AG04450 (cell line): ENCODE measurements at regions of chr14 and their contacts with region 1.

Region 1: GRCh38 chr14:53325176-53325806 is 172.2 kb upstream of the DDHD1 start:
- DNase-seq: no peak
- H3K4me3 ChIP-seq: no peak overlapping the region
- H3K27ac ChIP-seq: no peak overlapping the region
- H3K27me3 ChIP-seq: no peaks in the 10 kb centered on the region
- CTCF ChIP-seq: peak; percentile 66

Region 2: DNA sequence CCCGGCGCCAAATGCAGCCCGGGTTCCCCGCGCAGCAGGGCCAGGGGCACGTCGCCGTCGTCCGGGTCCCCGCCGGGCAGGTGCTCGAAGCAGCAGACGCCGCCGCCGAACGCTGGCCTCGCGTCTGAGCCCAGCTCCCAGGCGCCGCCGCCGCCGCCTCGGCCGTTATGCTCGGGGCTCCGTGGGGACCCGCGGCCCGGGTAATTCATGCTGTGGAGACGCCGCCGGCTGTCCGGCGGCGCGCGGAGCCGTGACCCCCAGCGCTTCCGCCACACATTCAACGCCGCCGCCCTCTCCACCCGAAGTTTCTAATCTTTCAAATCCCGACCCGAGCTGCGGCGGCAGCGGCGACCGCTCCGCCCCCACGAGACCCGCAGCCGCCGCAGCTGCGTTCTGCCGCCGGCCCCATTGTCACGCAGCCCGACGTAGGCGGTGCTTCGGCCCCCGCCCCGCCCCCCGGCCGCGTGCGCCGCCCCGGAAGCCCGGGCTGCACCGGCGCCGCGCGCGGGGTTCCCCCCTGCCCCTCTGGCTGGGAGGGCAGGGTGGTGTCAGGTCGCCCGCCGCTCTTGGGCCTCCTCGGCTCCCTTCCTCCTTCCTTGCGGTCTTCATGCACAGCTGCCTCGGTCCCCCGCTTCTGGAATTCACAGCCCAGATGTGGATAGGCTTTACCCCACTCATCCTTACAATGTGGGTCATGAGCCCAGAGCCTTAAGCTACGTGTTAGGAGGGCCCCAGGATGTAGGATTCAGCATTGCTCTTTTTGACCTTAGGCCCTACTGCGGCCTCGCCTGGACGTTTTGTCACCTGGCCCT is 172.2 kb before region 1 on chr14 and contains the start of gene DDHD1:
- CTCF ChIA-PET with region 1: no interaction called
- POLR2A ChIA-PET with region 1: no interaction called
- DNase-seq: no peak
- H3K4me3 ChIP-seq: peak within 1 kb of the TSS; percentile 94
- H3K27ac ChIP-seq: peak within 1 kb of the TSS; percentile 70
- H3K27me3 ChIP-seq: no peaks in the 10 kb centered on the region
- CTCF ChIP-seq: no peak
- polyA plus RNA-seq, gene DDHD1: 11.1 and 16.7 TPM in 2 replicates

Region 3: DNA sequence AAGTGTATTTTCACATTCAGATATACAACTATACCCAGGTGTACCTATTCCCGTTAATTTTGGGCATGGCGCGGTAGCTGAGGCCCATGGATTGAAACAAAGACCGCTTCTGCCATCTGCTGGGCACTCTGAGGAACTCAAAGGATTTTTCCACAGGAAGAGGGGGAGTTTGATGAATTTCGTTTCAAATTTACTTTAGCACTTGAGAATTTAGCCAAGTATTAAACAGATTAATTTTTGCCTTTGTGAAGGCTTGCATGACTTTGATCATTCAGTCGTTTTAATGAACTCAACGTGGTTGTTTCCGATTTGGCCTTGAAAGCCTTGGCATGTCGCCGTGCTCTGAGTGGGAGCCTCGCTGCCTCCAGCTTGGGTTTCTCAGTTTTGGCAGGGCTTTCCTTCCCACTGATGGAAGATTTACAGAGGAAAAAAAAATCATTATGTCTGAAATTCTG is 19.0 kb before region 1 on chr14:
- CTCF ChIA-PET with region 1: interaction called, 20 read pairs
- POLR2A ChIA-PET with region 1: no interaction called
- DNase-seq: peak; percentile 42
- H3K4me3 ChIP-seq: peak overlapping the region; percentile 55
- H3K27ac ChIP-seq: no peak overlapping the region
- H3K27me3 ChIP-seq: peaks cover 2% of the 10 kb centered on the region
- CTCF ChIP-seq: peak; percentile 79

Region 4: DNA sequence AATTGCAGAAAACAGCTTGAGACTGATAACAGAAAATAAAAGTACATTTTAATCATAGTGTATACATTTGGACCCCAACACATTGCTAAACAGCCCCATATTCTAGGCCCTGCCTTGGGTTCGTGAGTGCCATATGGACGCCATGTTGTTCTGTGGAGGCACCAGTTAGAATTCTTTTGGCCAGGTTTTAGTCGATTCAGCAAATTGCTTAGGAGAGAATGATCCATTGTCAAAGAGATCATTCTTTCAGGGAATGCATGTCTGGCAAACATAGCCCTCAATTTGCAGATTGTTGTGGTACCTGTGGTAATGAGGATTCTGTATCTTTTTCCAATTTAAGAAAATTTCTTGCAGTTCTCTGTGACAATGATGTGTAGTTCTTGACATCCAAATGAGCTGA is 11.4 kb after region 1 on chr14:
- CTCF ChIA-PET with region 1: interaction called, 10 read pairs
- POLR2A ChIA-PET with region 1: no interaction called
- DNase-seq: no peak
- H3K4me3 ChIP-seq: no peak overlapping the region
- H3K27ac ChIP-seq: no peak overlapping the region
- H3K27me3 ChIP-seq: no peaks in the 10 kb centered on the region
- CTCF ChIP-seq: no peak